ENCODE measurements at regions of chr1 and their contacts with region 1.

Region 1: DNA sequence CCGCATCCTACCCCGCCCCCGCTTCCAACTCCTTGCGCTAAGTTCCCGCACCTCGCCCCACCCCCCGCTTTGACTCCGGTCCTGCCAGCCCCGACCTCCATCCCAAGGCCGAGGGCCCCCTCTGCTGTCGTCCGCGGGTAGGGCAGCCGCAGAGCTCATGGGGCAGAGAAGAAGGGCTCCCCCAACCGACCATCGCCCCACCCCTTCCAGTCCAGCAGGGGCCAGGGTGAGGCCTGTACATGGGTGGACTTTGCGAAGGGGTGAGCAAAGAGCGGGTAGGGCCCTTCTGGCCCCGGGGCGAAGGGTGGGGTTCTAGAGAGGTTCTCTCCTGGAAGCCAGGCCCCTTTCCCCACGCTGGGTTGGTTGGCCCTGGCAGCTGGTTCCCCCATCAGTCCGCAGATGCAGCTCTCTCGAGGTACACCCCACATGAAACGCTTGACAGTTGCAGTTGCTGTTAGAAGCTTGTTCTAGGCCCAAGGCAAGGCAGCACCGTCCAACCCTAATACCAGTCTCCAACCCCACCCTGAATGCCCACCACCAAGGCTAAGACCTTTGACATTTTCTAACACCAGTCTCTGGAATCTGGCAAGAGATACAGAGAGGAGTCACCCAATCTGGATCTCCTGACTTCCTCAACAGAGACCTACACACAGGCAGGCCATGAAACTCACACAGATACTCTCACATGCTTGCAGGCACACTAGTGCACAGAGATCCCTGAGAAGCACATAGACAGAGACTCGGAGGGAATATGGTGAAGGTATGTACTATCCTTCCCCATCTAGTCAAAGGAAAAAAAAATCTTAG is 25.3 kb upstream of the ADGRB2 start:
- DNase-seq: peak; percentile 94 to 99 (median 95)
- H3K4me3 ChIP-seq: peak overlapping the region; percentile 57 to 91 (median 77)
- H3K27ac ChIP-seq: peak overlapping the region; percentile 14 to 99 (median 96)
- H3K27me3 ChIP-seq: no peaks in the 10 kb centered on the region
- CTCF ChIP-seq: peak; percentile 61 to 96 (median 89)

Region 2: GRCh38 chr1:31564134-31564989 is 225.1 kb before region 1 on chr1:
- intact Hi-C with region 1: loop called (anchors 2 to 5 kb)
- DNase-seq: peak in 4 of 10 donors; percentile 40 to 68 (median 58)
- H3K4me3 ChIP-seq: no peak overlapping the region
- H3K27ac ChIP-seq: no peak overlapping the region
- H3K27me3 ChIP-seq: no peaks in the 10 kb centered on the region
- CTCF ChIP-seq: peak; percentile 67 to 96 (median 88)

Region 3: DNA sequence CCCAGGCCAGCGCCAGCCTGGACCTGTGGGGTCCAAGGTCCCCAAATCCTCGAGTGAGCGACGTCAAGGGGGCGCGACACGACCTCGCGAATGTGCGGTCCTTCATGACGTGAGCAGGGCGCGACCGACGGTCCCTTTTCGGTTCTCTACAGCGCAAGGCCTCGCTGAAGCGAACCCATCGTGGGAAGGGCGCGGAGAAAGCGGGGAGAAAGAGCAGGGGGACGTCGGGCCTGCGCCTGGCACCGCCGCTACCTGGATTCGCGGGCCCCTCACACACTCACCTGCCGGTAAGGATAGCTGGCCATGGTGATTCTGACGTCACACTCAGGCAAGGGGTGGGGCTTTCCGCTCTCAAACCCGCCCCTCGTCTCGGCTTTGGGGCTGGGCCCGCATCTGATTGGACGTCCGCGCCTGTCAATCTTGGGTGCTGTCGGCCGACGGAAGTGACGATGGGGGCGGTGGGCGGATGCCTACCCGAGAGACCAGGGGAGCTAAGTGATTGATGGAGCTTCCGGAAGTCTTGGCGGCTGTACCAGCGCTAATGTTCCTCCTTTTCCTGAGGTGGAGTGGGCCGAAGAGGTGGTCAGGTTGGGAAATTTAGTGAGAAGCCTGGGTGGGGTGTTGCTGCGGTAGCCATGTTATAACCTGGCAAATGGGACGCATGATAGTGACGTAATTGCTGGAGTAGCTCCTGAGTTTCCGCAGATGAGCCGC is 144.7 kb before region 1 on chr1 and contains the start of gene PEF1:
- intact Hi-C with region 1: loop called in 1 of 2 experiments (anchors 5 kb)
- DNase-seq: peak; percentile 99 to 100 (median 99)
- H3K4me3 ChIP-seq: peak within 1 kb of the TSS; percentile 68 to 100 (median 93)
- H3K27ac ChIP-seq: peak within 1 kb of the TSS; percentile 68 to 99 (median 96)
- H3K27me3 ChIP-seq: no peaks in the 10 kb centered on the region
- CTCF ChIP-seq: peak in 6 of 56 donors; percentile 8 to 19 (median 14)
- total RNA-seq, gene PEF1: 41.8 to 80.3 (median 60.8) TPM

Region 4: DNA sequence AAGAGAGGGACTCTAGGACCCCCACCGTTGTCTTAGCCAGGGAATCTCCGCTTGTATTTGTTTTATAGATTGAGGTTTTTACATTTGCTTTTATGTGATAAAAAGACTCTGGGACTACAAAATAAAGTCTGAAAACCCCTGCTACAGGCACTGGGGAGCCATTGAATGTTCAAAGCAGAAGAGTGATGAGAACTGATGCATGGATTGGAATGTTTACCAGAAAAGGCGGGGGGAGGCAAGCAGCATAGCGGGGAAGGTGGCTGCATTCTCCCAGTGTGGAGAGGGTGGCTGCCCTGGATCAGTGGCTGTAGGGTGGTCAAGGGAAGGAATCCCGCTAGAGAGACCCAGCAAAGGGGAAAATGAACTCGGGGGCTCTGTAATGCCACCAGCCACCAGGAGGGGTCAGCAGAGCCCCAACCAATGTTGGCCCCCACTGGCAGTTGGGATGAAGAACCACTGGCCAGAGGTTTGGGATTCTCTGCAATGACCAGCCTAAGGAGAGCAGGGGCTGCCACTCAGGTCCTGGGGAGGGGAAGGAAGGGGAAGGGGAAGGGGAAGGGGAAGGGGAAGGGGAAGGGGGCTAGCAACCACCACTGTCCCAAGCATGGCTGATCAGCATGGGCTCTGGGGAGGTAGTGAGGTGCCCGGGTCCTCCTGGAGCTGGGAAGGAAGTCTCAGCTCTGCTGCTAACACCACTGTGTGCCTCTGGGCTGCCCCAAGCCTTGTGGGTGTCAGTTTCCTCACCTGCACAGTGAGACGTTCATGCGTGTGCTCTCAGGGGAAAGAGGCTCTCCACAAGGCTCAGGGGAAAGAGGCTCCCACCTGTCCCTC is 125.6 kb before region 1 on chr1:
- intact Hi-C with region 1: loop called (anchors 1 to 2 kb)
- DNase-seq: peak in 9 of 10 donors; percentile 39 to 83 (median 69)
- H3K4me3 ChIP-seq: no peak overlapping the region
- H3K27ac ChIP-seq: peak overlapping the region in 1 of 59 donors; percentile 18
- H3K27me3 ChIP-seq: no peaks in the 10 kb centered on the region
- CTCF ChIP-seq: peak; percentile 68 to 96 (median 88)

Region 5: GRCh38 chr1:31715087-31715872 is 74.2 kb before region 1 on chr1:
- intact Hi-C with region 1: loop called (anchors 1 to 5 kb)
- DNase-seq: peak; percentile 66 to 96 (median 77)
- H3K4me3 ChIP-seq: peak overlapping the region; percentile 34 to 71 (median 55)
- H3K27ac ChIP-seq: peak overlapping the region in 58 of 59 donors; percentile 6 to 94 (median 81)
- H3K27me3 ChIP-seq: no peaks in the 10 kb centered on the region
- CTCF ChIP-seq: peak; percentile 57 to 95 (median 84)